Psoas muscle (tissue), 8 donors: ENCODE measurements at regions of chr12 and their contacts with region 1.

Region 1: GRCh38 chr12:3998968-3999826 is 126.0 kb upstream of the PARP11 start:
- DNase-seq: no peak
- ATAC-seq: no peak
- H3K4me3 ChIP-seq: no peak overlapping the region
- H3K27ac ChIP-seq: no peak overlapping the region
- H3K4me1 ChIP-seq: no peaks in the 10 kb centered on the region
- H3K27me3 ChIP-seq: peaks cover 0 to 6% (median 4%) of the 10 kb centered on the region in 3 donors
- CTCF ChIP-seq: no peak

Region 2: GRCh38 chr12:3820122-3820521 is 179.1 kb before region 1 on chr12:
- intact Hi-C with region 1: no loop called
- DNase-seq: no peak
- ATAC-seq: peak; percentile 71 to 89 (median 78)
- H3K4me3 ChIP-seq: no peak overlapping the region
- H3K27ac ChIP-seq: no peak overlapping the region
- H3K4me1 ChIP-seq: no peaks in the 10 kb centered on the region
- H3K27me3 ChIP-seq: no peaks in the 10 kb centered on the region
- CTCF ChIP-seq: no peak

Region 3: GRCh38 chr12:3947781-3948180 is 51.4 kb before region 1 on chr12:
- intact Hi-C with region 1: no loop called
- DNase-seq: no peak
- ATAC-seq: no peak
- H3K4me3 ChIP-seq: no peak overlapping the region
- H3K27ac ChIP-seq: no peak overlapping the region
- H3K4me1 ChIP-seq: no peaks in the 10 kb centered on the region
- H3K27me3 ChIP-seq: peaks cover 0 to 5% (median 0%) of the 10 kb centered on the region in 3 donors
- CTCF ChIP-seq: no peak

Region 4: GRCh38 chr12:3964439-3964838 is 34.8 kb before region 1 on chr12:
- intact Hi-C with region 1: no loop called
- DNase-seq: no peak
- ATAC-seq: no peak
- H3K4me3 ChIP-seq: no peak overlapping the region
- H3K27ac ChIP-seq: no peak overlapping the region
- H3K4me1 ChIP-seq: no peaks in the 10 kb centered on the region
- H3K27me3 ChIP-seq: peaks cover 1 to 6% (median 3%) of the 10 kb centered on the region in 3 donors
- CTCF ChIP-seq: no peak

Region 5: GRCh38 chr12:4030929-4031702 is 31.9 kb after region 1 on chr12:
- intact Hi-C with region 1: loop called in 1 of 2 experiments (anchors 5 kb)
- DNase-seq: peak; percentile 91 to 92
- ATAC-seq: peak; percentile 99 to 100 (median 100)
- H3K4me3 ChIP-seq: peak overlapping the region; percentile 67
- H3K27ac ChIP-seq: peak overlapping the region; percentile 71
- H3K4me1 ChIP-seq: peaks cover 6% of the 10 kb centered on the region
- H3K27me3 ChIP-seq: peaks cover 0 to 13% (median 0%) of the 10 kb centered on the region in 3 donors
- CTCF ChIP-seq: no peak

Region 6: DNA sequence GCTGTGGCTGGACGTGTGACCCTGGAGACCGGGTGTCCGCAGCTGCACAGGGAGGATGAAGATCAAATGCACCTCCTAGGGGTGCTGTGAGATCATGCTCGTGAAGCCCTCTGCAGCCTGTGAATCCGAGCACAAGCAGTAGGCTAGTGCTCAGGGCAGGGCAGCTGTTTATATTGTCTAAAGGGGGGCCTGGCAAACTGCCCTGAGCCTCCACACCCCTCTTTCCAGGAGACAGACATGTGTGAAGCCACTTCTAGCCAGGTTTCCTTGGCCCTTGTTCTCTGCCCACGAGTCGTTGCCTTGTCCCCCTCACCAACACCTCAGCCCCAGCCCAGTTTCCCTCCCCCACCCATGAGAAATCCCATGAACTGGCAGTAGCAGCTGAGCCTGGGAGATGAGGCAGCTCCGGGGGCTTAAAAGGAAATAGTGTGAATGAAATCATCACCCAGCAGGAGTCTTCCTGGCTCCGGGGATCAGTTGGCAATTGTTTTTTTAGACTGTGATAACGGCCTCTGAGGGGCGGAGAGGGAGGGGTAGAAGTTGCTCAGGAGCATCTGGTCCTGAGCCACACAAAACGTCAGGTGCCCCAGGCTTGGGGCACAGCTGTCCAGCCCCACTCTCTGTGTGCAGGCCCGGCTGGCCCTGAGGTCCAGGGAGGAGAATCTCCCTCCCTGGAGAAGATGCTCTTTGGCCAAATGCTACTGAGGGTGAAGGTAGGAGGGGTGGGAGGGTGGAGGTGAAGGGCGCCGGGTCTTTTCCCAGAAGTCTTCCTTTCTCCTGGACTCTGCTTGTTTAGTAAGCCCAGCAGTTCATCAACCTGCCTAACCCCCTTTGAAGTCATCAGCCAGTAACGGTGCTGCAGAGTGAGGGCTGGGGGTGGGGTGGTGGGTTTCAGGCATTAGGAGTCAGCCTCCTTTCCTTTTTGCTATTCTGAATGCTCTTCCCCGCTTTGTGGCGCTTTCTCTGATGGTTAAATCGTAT is 442.4 kb after region 1 on chr12:
- intact Hi-C with region 1: no loop called
- DNase-seq: peak in 1 of 2 donors; percentile 79
- ATAC-seq: peak; percentile 61 to 89 (median 72)
- H3K4me3 ChIP-seq: peak overlapping the region; percentile 3
- H3K27ac ChIP-seq: peak overlapping the region; percentile 86
- H3K4me1 ChIP-seq: peaks cover 18% of the 10 kb centered on the region
- H3K27me3 ChIP-seq: no peaks in the 10 kb centered on the region
- CTCF ChIP-seq: no peak